Aorta (tissue), 5 donors: ENCODE measurements at regions of chr5 and their contacts with region 1.

Region 1: DNA sequence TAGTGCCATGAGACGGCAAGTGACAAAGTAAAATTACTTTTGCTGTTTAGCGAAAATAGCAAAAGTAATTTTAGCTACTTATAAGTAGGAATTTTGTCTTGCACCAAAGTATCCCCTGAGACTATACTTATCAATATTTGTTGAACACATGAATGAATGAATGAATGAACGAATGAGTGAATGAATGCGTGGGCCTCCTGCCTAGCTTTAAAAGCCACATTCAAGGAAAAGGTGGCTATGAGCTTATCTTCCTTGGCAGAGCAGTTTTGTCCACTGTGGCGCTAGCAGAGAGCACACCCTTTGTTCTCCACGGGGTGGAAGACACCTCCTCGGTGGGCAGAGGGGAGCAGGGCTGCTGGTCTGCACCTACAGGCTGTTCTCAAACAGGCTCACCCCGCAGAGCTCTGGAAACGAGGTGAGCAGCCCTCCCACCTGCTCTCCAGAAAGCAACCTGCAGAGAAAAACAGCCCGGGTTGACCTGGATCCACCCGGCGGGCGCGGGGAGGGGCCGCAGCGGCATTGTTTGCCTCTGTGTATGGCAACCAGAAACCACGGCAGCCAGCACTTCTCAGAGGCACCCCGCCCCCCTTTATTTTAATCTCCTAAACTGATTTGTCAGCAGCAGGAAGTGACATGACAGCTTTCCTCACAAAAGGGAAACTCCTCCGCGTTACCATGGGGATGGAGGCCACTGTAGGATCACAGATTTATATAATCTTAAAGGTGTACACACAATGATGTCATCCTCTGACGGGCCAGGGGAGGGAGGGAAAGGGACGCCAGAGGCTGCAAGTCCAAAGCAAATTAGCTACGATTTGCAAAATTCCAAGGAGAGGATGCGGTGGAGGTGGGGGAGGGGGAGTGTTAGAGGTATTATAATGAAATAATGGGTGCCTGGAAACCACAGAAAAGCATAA is 5.9 kb downstream of the DUSP1 start:
- DNase-seq: peak; percentile 96 to 97
- ATAC-seq: peak; percentile 75
- H3K4me3 ChIP-seq: no peak overlapping the region
- H3K27ac ChIP-seq: peak overlapping the region; percentile 88 to 99
- H3K4me1 ChIP-seq: no peaks in the 10 kb centered on the region
- H3K27me3 ChIP-seq: no peaks in the 10 kb centered on the region

Region 2: GRCh38 chr5:172721301-172722130 is 43.6 kb before region 1 on chr5:
- intact Hi-C with region 1: loop called (anchors 2 kb)
- DNase-seq: peak in 1 of 2 donors; percentile 56
- ATAC-seq: peak; percentile 79
- H3K4me3 ChIP-seq: no peak overlapping the region
- H3K27ac ChIP-seq: peak overlapping the region in 1 of 2 donors; percentile 62
- H3K4me1 ChIP-seq: peaks cover 3% of the 10 kb centered on the region in 2 donors
- H3K27me3 ChIP-seq: no peaks in the 10 kb centered on the region

Region 3: GRCh38 chr5:172733131-172733973 is 31.8 kb before region 1 on chr5:
- intact Hi-C with region 1: loop called in 1 of 2 experiments (anchors 1 kb)
- DNase-seq: peak; percentile 93 to 94
- ATAC-seq: peak; percentile 95
- H3K4me3 ChIP-seq: no peak overlapping the region
- H3K27ac ChIP-seq: peak overlapping the region; percentile 97 to 99
- H3K4me1 ChIP-seq: no peaks in the 10 kb centered on the region
- H3K27me3 ChIP-seq: no peaks in the 10 kb centered on the region

Region 4: GRCh38 chr5:172740428-172741201 is 24.5 kb before region 1 on chr5:
- intact Hi-C with region 1: loop called in 1 of 2 experiments (anchors 2 kb)
- DNase-seq: peak; percentile 93 to 95
- ATAC-seq: peak; percentile 88
- H3K4me3 ChIP-seq: no peak overlapping the region
- H3K27ac ChIP-seq: peak overlapping the region; percentile 89 to 96
- H3K4me1 ChIP-seq: peaks cover 0 to 3% of the 10 kb centered on the region in 2 donors
- H3K27me3 ChIP-seq: no peaks in the 10 kb centered on the region

Region 5: DNA sequence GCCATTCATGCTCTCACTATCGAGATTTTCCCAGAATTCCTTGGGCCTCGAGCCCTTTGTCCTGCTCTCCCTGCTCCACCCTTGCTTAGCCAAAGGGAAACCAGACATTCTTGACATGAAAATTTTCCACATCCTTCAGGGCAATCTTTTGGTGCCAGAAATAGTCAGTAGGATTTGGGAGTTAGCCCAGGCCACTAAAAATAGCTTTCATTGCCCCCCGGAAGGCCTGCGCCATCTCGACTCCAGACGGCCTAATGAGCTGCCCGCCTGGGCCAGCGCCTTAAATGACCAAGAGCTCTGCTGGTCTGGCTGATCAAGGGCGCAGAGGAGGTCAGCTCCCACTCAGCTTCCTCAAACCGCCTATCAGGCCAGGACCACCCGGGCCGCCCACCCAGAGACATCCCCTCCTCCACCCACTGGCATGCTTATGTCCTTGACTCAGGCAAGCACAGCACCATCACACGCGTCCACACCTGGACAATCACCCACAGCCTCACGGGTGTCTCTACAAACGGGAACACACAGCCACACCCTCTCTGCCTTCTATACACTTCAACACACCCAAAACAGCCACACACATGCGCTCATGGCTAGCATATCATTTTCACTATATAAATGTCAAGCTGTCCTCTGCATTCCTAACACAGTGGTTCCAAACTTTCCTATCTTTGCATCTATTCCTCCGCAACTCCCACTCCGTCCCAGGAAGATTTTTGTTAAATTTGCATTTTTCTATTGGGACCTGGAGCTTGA is 15.1 kb before region 1 on chr5:
- intact Hi-C with region 1: loop called in 1 of 2 experiments (anchors 1 kb)
- DNase-seq: peak; percentile 86 to 88
- ATAC-seq: peak; percentile 82
- H3K4me3 ChIP-seq: no peak overlapping the region
- H3K27ac ChIP-seq: peak overlapping the region; percentile 91 to 100
- H3K4me1 ChIP-seq: peaks cover 0 to 8% of the 10 kb centered on the region in 2 donors
- H3K27me3 ChIP-seq: no peaks in the 10 kb centered on the region

Region 6: GRCh38 chr5:172868924-172869591 is 104.0 kb after region 1 on chr5:
- intact Hi-C with region 1: loop called (anchors 2 to 5 kb)
- DNase-seq: peak; percentile 91 to 94
- ATAC-seq: peak; percentile 89
- H3K4me3 ChIP-seq: no peak overlapping the region
- H3K27ac ChIP-seq: peak overlapping the region; percentile 80 to 91
- H3K4me1 ChIP-seq: peaks cover 3 to 4% of the 10 kb centered on the region in 2 donors
- H3K27me3 ChIP-seq: no peaks in the 10 kb centered on the region